Mammary epithelial cell (primary cell): ENCODE measurements at regions of chr4 and their contacts with region 1.

Region 1: GRCh38 chr4:75555294-75556164 is at the start of gene ODAPH:
- DNase-seq: peak; percentile 90
- H3K4me3 ChIP-seq: peak within 1 kb of the TSS in 2 of 3 experiments; percentile 11 to 33
- H3K27ac ChIP-seq: peak within 1 kb of the TSS; percentile 30
- H3K4me1 ChIP-seq: peaks cover 17% of the 10 kb centered on the region
- H3K27me3 ChIP-seq: no peaks in the 10 kb centered on the region
- CTCF ChIP-seq: peak; percentile 24 to 29
- total RNA-seq, gene ODAPH: not detected

Region 2: DNA sequence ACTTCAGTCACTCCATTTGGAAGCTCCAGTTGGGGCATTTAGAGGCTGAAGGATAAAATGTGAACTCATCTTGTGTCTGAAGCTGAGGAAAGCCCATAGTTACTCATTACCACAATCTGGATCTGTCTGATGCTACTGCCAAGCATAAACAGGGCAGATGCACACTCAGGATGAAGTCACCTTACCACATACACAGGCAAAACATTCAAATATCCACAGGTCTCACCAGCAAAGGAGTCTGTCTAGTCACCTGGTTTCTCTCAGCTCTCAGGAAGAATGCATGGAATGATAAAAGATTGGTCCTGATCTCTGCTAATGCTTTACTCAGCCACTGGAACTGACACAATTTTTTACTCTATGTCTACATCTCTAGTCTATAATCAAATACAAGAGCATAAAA is 12.7 kb before region 1 on chr4:
- CTCF ChIA-PET with region 1: no interaction called
- dilution Hi-C with region 1: no loop called
- in situ Hi-C with region 1: no loop called
- intact Hi-C with region 1: loop called (anchors 1 kb)
- DNase-seq: peak; percentile 99
- H3K4me3 ChIP-seq: no peak overlapping the region
- H3K27ac ChIP-seq: no peak overlapping the region
- H3K4me1 ChIP-seq: peaks cover 16% of the 10 kb centered on the region
- H3K27me3 ChIP-seq: no peaks in the 10 kb centered on the region
- CTCF ChIP-seq: no peak